Ovary (tissue), 10 donors: ENCODE measurements at regions of chr14 and their contacts with region 1.

Region 1: DNA sequence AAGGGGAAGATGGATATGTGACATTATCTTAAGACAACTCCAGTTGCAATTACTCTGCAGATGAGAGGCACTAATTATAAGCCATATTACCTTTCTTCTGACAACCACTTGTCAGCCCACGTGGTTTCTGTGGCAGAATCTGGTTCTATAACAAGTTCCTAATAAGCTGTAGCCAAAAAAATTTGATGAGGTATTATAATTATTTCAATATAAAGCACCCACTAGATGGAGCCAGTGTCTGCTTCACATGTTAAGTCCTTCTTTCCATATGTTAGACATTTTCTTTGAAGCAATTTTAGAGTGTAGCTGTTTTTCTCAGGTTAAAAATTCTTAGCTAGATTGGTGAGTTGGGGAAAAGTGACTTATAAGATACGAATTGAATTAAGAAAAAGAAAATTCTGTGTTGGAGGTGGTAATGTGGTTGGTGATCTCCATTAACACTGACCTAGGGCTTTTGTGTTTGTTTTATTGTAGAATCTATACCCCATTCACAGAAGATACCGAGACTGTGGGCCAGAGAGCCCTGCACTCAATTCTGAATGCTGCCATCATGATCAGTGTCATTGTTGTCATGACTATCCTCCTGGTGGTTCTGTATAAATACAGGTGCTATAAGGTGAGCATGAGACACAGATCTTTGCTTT is 36.9 kb downstream of the PSEN1 start:
- DNase-seq: no peak
- H3K4me3 ChIP-seq: no peak overlapping the region
- H3K27ac ChIP-seq: no peak overlapping the region
- H3K4me1 ChIP-seq: no peaks in the 10 kb centered on the region
- H3K27me3 ChIP-seq: no peaks in the 10 kb centered on the region
- CTCF ChIP-seq: peak in 2 of 3 donors; percentile 46 to 61
- EP300 ChIP-seq: no peak
- POLR2A ChIP-seq: no peak

Region 2: GRCh38 chr14:73269729-73270531 is 96.7 kb after region 1 on chr14:
- intact Hi-C with region 1: loop called in 1 of 4 experiments (anchors 10 kb)
- DNase-seq: peak; percentile 49 to 77 (median 61)
- H3K4me3 ChIP-seq: peak overlapping the region; percentile 28
- H3K27ac ChIP-seq: peak overlapping the region; percentile 44 to 47
- H3K4me1 ChIP-seq: peaks cover 5% of the 10 kb centered on the region
- H3K27me3 ChIP-seq: no peaks in the 10 kb centered on the region
- CTCF ChIP-seq: no peak
- EP300 ChIP-seq: no peak
- POLR2A ChIP-seq: no peak

Region 3: DNA sequence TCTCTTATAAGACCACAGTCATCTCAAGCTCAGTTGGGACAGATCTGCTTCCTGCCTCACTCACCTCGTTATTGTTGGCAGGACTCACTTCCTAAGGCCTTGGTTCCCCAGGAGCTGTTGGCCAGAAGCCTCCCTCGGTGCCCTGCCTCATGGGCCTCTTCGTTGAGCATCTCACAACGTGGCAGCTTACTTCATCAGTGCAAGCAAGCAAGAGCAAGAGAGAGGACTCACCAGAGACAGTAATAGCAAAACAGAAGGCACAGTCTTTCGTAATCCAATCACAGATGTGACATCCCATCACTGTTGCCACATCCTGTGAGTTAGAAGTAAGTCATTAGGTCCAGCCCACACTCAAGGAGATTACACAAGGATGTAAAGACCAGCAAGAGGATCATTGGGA is 290.2 kb after region 1 on chr14:
- intact Hi-C with region 1: loop called in 2 of 4 experiments (anchors 2 to 10 kb)
- DNase-seq: peak in 1 of 5 donors; percentile 29
- H3K4me3 ChIP-seq: no peak overlapping the region
- H3K27ac ChIP-seq: no peak overlapping the region
- H3K4me1 ChIP-seq: peaks cover 13% of the 10 kb centered on the region
- H3K27me3 ChIP-seq: no peaks in the 10 kb centered on the region
- CTCF ChIP-seq: no peak
- EP300 ChIP-seq: no peak
- POLR2A ChIP-seq: no peak

Region 4: DNA sequence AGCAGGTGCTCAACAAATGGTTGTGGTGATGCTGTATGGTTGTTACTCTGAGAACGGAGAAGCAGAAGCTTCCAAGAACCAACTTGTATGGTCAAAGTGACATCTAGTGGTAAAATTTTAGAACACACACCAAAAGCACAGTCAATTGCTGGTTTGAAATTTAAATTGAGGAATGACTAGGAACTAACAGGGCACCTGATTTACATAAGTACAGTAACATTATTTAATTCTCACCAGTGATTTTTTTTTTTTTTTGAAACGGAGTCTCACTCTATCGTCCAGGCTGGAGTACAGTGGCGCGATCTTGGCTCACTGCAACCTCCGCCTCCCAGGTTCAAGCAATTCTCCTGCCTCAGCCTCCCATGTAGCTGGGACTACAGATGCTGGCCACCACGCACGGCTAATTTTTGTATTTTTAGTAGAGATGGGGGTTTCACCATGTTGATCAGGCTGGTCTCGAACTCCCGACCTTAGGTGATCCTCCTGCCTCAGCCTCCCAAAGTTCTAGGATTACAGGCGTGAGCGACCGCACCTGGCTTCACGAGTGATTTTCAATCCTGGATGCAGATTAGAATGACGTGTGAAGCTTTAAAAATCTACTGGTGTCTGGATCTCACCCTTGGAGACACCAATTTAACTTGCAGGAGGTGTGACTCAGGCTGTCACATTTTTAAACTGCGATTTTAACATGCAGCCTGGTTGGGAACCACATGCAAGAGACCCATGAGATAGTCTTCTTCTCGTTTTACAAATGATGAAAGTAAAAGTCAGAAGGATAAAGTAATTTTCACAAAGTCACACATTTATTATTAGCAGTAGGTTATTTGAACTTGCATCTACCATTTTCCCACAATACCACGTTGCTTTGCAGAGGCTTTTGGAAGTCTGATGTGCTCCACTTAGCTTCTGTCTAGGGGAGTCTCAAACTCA is 299.2 kb after region 1 on chr14:
- intact Hi-C with region 1: loop called (anchors 2 to 10 kb)
- DNase-seq: no peak
- H3K4me3 ChIP-seq: no peak overlapping the region
- H3K27ac ChIP-seq: no peak overlapping the region
- H3K4me1 ChIP-seq: no peaks in the 10 kb centered on the region
- H3K27me3 ChIP-seq: no peaks in the 10 kb centered on the region
- CTCF ChIP-seq: peak; percentile 43 to 72 (median 66)
- EP300 ChIP-seq: no peak
- POLR2A ChIP-seq: no peak